Endothelial cell of umbilical vein (primary cell): ENCODE measurements at regions of chr3 and their contacts with region 1.

Region 1: GRCh38 chr3:197256836-197257444 is 41.5 kb downstream of the DLG1 start:
- DNase-seq: peak; percentile 71
- H3K4me3 ChIP-seq: no peak overlapping the region
- H3K27ac ChIP-seq: no peak overlapping the region
- H3K4me1 ChIP-seq: no peaks in the 10 kb centered on the region
- H3K27me3 ChIP-seq: no peaks in the 10 kb centered on the region
- CTCF ChIP-seq: peak; percentile 34 to 50
- POLR2A ChIP-seq: no peak

Region 2: DNA sequence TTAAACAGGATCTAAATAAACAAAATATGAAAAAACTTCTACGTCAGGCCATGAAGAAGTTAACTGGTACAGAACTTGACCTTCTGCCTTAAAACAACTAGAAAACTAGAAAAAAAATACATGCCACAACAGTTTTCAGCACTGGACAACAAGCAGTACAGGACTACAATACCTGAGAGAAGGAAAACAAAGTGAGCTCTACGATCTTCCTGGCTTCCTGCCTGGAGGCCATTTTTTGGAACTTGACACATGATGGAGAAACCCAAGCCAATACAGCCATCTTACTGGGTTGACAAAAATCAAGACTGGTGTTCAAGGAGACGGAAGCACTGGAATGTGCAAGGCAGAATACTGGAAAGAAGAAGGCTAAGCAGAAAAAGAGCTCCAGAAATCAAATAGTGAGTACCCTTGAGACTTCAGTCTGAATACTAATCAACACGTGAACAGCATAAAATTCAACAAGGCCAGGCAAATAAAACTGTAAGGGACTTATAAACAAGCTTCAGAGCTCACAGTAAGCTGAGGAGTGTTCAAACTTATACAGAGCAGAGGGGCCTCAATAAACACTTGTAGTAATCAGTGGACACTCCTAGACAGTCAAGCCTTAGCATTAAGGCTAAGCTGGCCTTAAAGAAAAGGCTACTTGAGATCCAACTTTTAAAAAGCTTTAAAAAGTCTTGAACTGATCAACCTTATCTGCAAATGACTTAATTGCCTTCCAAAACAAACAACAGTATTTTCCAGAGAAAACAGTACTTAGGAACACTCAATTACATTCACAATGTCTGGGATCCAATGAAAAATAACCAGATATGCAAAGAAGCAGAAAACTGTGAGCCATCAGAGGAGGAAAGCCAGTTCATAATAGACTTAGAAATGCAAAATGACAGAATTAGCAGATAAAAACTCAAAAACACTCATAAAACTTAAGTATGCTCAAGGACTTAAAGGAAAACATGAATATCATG is 21.7 kb before region 1 on chr3:
- CTCF ChIA-PET with region 1: interaction called, 16 read pairs
- POLR2A ChIA-PET with region 1: no interaction called
- dilution Hi-C with region 1: no loop called
- intact Hi-C with region 1: no loop called
- DNase-seq: no peak
- H3K4me3 ChIP-seq: no peak overlapping the region
- H3K27ac ChIP-seq: no peak overlapping the region
- H3K4me1 ChIP-seq: no peaks in the 10 kb centered on the region
- H3K27me3 ChIP-seq: no peaks in the 10 kb centered on the region
- CTCF ChIP-seq: no peak
- POLR2A ChIP-seq: no peak

Region 3: DNA sequence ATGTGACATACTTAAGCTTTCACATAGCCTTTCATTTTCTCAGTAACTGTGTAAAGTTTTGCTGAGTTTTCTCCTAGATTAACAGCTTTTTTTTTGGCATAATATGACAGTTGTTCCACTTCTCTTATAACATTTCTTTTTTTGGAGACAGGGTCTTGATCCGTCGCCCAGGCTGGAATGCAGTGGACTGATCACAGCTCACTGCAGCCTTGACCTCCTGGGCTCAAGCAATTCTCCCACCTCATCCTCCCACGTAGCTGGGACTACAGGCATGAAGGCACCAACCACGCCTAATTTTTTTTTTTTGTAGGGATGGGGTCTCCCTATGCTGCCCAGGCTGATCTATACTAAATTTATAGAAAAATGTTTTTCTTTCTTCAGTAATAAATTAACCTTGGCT is 11.4 kb after region 1 on chr3:
- CTCF ChIA-PET with region 1: interaction called, 45 read pairs
- POLR2A ChIA-PET with region 1: no interaction called
- dilution Hi-C with region 1: no loop called
- intact Hi-C with region 1: no loop called
- DNase-seq: no peak
- H3K4me3 ChIP-seq: no peak overlapping the region
- H3K27ac ChIP-seq: no peak overlapping the region
- H3K4me1 ChIP-seq: no peaks in the 10 kb centered on the region
- H3K27me3 ChIP-seq: no peaks in the 10 kb centered on the region
- CTCF ChIP-seq: no peak
- POLR2A ChIP-seq: no peak

Region 4: GRCh38 chr3:197456261-197457091 is 199.5 kb after region 1 on chr3:
- CTCF ChIA-PET with region 1: interaction called, 29 read pairs
- POLR2A ChIA-PET with region 1: no interaction called
- dilution Hi-C with region 1: no loop called
- intact Hi-C with region 1: no loop called
- DNase-seq: peak; percentile 77
- H3K4me3 ChIP-seq: peak overlapping the region in 2 of 3 experiments; percentile 12 to 35
- H3K27ac ChIP-seq: peak overlapping the region; percentile 47
- H3K4me1 ChIP-seq: peaks cover 11% of the 10 kb centered on the region
- H3K27me3 ChIP-seq: no peaks in the 10 kb centered on the region
- CTCF ChIP-seq: no peak
- POLR2A ChIP-seq: peak; percentile 89

Region 5: GRCh38 chr3:197487908-197488391 is 231.0 kb after region 1 on chr3:
- CTCF ChIA-PET with region 1: interaction called, 17 read pairs
- POLR2A ChIA-PET with region 1: no interaction called
- dilution Hi-C with region 1: no loop called
- intact Hi-C with region 1: no loop called
- DNase-seq: peak; percentile 98
- H3K4me3 ChIP-seq: no peak overlapping the region
- H3K27ac ChIP-seq: peak overlapping the region; percentile 87
- H3K4me1 ChIP-seq: peaks cover 46% of the 10 kb centered on the region
- H3K27me3 ChIP-seq: no peaks in the 10 kb centered on the region
- CTCF ChIP-seq: no peak
- POLR2A ChIP-seq: no peak

Region 6: DNA sequence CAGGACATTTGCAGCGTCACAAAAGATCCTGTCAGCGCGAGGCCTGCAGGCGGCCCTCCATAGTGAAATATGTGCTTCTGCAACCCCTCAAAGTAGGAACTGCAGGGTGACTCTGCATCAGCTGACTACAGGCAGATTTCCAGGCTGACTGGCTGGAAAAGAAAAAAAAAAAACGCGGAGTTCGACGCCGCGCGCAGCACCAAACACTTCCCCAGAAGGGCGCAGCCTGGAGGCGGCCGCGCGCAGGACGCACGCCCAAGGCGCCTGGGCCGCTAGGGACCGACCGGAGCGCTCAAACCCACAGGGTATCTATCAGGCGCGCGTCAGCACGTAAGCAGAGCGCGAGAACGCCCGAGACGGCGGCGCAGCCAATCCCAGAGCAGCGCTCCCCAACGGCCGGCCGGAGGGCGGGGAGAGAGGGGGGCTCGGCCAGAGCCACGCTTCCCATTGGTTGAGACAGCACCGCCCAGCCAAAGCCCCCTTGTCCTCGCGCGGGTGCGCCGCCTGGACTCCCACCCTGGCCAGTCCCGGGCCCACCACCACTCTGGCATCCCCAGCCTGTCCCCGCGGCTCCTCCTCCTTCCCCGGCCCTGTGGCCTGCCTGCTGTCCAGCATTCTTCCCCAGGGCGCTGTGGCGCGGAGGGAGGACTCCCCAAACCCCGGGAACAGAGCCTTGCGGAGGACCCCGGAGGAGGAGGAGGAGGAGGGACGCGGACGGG is 297.8 kb after region 1 on chr3:
- CTCF ChIA-PET with region 1: no interaction called
- POLR2A ChIA-PET with region 1: no interaction called
- dilution Hi-C with region 1: no loop called
- intact Hi-C with region 1: loop called (anchors 1 kb)
- DNase-seq: peak; percentile 97
- H3K4me3 ChIP-seq: peak overlapping the region; percentile 48 to 77 (median 51)
- H3K27ac ChIP-seq: no peak overlapping the region
- H3K4me1 ChIP-seq: peaks cover 6% of the 10 kb centered on the region
- H3K27me3 ChIP-seq: peaks cover 11 to 28% of the 10 kb centered on the region in 2 experiments
- CTCF ChIP-seq: peak; percentile 57 to 80
- POLR2A ChIP-seq: peak; percentile 29